B cell (primary cell): ENCODE measurements at regions of chrX and their contacts with region 1.

Region 1: DNA sequence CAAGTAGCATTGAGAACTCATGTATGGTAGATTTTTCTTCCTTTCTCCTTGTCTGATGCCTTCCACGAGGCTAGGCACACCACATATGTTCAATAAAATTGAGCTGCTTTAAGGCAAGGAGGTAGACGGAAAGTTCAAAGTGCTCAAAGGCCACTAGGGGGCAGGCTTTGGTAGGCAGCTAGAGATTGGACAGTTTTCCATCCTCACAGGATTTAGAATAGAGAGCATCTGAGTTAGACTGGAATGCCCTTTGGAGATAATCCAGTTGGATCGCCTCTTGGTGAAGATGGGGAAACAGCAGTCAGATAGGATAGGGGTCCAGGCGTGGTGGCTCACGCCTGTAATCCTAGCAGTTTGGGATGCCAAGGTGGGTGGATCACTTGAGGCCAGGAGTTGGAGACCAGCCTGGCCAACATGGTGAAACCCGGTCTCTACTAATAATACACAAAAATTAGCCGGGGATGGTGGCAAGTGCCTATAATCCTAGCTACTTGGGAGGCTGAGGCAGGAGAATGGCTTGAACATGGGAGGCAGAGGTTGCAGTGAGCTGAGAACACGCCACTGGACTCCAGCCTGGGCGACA is 30.4 kb downstream of the ELF4 start:
- DNase-seq: peak; percentile 69
- ATAC-seq: no peak
- H3K4me3 ChIP-seq: no peak overlapping the region
- H3K4me3 Mint-ChIP-seq: no peak overlapping the region
- H3K27ac ChIP-seq: no peak overlapping the region
- H3K27ac Mint-ChIP-seq: peak overlapping the region; percentile 47
- H3K4me1 ChIP-seq: peaks cover 32 to 40% of the 10 kb centered on the region in 2 donors
- H3K4me1 Mint-ChIP-seq: peaks cover 41% of the 10 kb centered on the region
- H3K27me3 ChIP-seq: no peaks in the 10 kb centered on the region
- H3K27me3 Mint-ChIP-seq: no peaks in the 10 kb centered on the region
- CTCF ChIP-seq: peak; percentile 72

Region 2: GRCh38 chrX:130055103-130055502 is 24.8 kb before region 1 on chrX:
- CTCF ChIA-PET with region 1: no interaction called
- POLR2A ChIA-PET with region 1: no interaction called
- intact Hi-C with region 1: no loop called
- DNase-seq: no peak
- ATAC-seq: no peak
- H3K4me3 ChIP-seq: no peak overlapping the region
- H3K4me3 Mint-ChIP-seq: no peak overlapping the region
- H3K27ac ChIP-seq: no peak overlapping the region
- H3K27ac Mint-ChIP-seq: no peak overlapping the region
- H3K4me1 ChIP-seq: peaks cover 0 to 5% of the 10 kb centered on the region in 2 donors
- H3K4me1 Mint-ChIP-seq: no peaks in the 10 kb centered on the region
- H3K27me3 ChIP-seq: no peaks in the 10 kb centered on the region
- H3K27me3 Mint-ChIP-seq: no peaks in the 10 kb centered on the region
- CTCF ChIP-seq: no peak

Region 3: DNA sequence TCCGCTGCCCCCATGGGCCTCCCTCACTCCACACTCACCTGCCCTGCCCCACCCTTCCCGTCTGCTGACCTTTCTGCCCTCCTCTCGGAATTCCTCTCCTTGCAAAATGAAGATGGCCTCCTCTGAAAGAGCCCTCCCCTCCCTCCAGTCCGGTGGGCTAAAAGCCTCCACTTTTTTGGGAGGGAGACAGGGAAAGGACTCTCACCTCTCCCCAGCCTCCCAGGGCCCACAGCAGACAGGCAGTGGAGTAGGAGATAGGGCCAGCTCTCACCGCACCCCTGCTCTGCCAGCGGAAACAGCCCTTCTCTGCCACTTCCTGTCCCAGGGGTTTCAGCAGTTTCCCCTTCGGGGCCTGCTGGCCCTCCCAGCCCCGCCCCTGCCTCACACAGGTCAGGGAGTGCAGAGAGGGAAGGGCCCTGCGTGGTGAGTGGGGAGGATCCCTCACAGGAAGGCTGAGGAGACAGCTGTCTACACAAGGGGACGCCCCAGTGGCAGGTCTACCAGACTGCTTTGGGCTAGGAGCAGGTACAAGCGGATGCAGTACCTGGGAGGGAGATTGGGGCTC is 12.1 kb after region 1 on chrX:
- CTCF ChIA-PET with region 1: interaction called, 17 read pairs
- POLR2A ChIA-PET with region 1: interaction called, 9 read pairs
- intact Hi-C with region 1: loop called (anchors 1 kb)
- DNase-seq: peak; percentile 92
- ATAC-seq: peak; percentile 96
- H3K4me3 ChIP-seq: peak overlapping the region; percentile 1 to 64 (median 49)
- H3K4me3 Mint-ChIP-seq: peak overlapping the region; percentile 88
- H3K27ac ChIP-seq: peak overlapping the region; percentile 75 to 81
- H3K27ac Mint-ChIP-seq: peak overlapping the region; percentile 95
- H3K4me1 ChIP-seq: peaks cover 44 to 70% of the 10 kb centered on the region in 2 donors
- H3K4me1 Mint-ChIP-seq: peaks cover 55% of the 10 kb centered on the region
- H3K27me3 ChIP-seq: no peaks in the 10 kb centered on the region
- H3K27me3 Mint-ChIP-seq: no peaks in the 10 kb centered on the region
- CTCF ChIP-seq: peak; percentile 14

Region 4: DNA sequence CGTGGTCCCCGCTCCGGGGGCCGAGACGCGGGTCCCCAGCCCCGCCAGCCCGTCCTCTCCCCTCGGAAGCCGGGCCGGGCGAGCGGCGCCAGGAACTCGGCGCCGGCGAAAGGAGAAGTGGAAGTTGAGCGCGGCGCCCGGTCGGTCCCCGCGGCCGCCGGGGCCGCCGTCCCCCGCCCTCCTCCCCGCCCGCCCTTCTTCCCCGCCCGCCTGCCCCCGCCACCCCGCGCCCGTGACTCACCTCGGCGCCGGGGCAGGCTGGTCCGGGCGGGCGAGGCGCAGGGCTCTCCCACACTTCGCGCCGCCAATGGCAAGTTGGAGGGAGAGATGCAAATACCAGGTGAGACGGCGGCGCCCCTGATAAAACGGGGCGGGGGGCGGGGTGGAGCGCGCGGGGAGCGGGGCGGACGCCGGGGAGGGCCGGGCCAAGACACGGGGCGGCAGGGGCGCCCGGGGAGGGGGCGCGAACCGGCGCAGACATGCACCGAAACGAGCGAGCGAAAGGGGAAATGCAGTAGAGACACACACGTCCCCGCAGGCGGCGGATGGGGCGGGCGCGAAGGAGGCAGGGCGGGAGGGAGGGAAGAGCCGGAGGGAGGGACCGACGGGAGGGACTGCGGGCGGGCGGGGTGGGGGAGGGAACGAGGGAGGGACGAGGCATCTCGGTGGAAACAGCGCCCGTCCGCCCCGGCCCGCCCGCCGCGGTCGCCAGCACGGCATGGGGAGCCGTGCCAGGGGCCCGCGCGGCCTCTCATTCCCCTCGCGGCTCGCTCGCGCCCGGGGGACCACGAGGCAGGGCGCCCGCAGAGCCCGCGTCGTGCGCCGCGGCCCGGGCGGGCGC is 30.7 kb after region 1 on chrX and contains the start of gene ELF4:
- CTCF ChIA-PET with region 1: interaction called, 164 read pairs
- POLR2A ChIA-PET with region 1: interaction called, 8 read pairs
- intact Hi-C with region 1: loop called (anchors 2 kb)
- DNase-seq: peak; percentile 71
- ATAC-seq: peak; percentile 64
- H3K4me3 ChIP-seq: peak within 1 kb of the TSS; percentile 47 to 72 (median 67)
- H3K4me3 Mint-ChIP-seq: peak within 1 kb of the TSS; percentile 94
- H3K27ac ChIP-seq: peak within 1 kb of the TSS; percentile 54 to 86
- H3K27ac Mint-ChIP-seq: peak within 1 kb of the TSS; percentile 93
- H3K4me1 ChIP-seq: peaks cover 13 to 19% of the 10 kb centered on the region in 2 donors
- H3K4me1 Mint-ChIP-seq: peaks cover 29% of the 10 kb centered on the region
- H3K27me3 ChIP-seq: no peaks in the 10 kb centered on the region
- H3K27me3 Mint-ChIP-seq: no peaks in the 10 kb centered on the region
- CTCF ChIP-seq: no peak
- total RNA-seq, gene ELF4: 26.3 and 26.5 TPM in 2 replicates

Region 5: GRCh38 chrX:130165703-130166502 is 86.0 kb after region 1 on chrX and contains the start of gene AIFM1:
- CTCF ChIA-PET with region 1: interaction called, 10 read pairs
- POLR2A ChIA-PET with region 1: interaction called, 4 read pairs
- intact Hi-C with region 1: loop called (anchors 5 kb)
- DNase-seq: peak; percentile 92
- ATAC-seq: peak; percentile 88
- H3K4me3 ChIP-seq: peak within 1 kb of the TSS; percentile 61 to 76 (median 66)
- H3K4me3 Mint-ChIP-seq: peak within 1 kb of the TSS; percentile 95
- H3K27ac ChIP-seq: peak within 1 kb of the TSS; percentile 54 to 77
- H3K27ac Mint-ChIP-seq: peak within 1 kb of the TSS; percentile 96
- H3K4me1 ChIP-seq: peaks cover 13 to 21% of the 10 kb centered on the region in 2 donors
- H3K4me1 Mint-ChIP-seq: peaks cover 31% of the 10 kb centered on the region
- H3K27me3 ChIP-seq: no peaks in the 10 kb centered on the region
- H3K27me3 Mint-ChIP-seq: no peaks in the 10 kb centered on the region
- CTCF ChIP-seq: no peak
- total RNA-seq, gene AIFM1: 14.8 and 15.9 TPM in 2 replicates

Region 6: GRCh38 chrX:130186651-130187050 is 106.7 kb after region 1 on chrX:
- CTCF ChIA-PET with region 1: interaction called, 84 read pairs
- POLR2A ChIA-PET with region 1: interaction called, 4 read pairs
- intact Hi-C with region 1: no loop called
- DNase-seq: no peak
- ATAC-seq: no peak
- H3K4me3 ChIP-seq: no peak overlapping the region
- H3K4me3 Mint-ChIP-seq: no peak overlapping the region
- H3K27ac ChIP-seq: no peak overlapping the region
- H3K27ac Mint-ChIP-seq: no peak overlapping the region
- H3K4me1 ChIP-seq: peaks cover 0 to 9% of the 10 kb centered on the region in 2 donors
- H3K4me1 Mint-ChIP-seq: peaks cover 21% of the 10 kb centered on the region
- H3K27me3 ChIP-seq: no peaks in the 10 kb centered on the region
- H3K27me3 Mint-ChIP-seq: no peaks in the 10 kb centered on the region
- CTCF ChIP-seq: no peak